Right ventricle myocardium inferior (tissue), 1 donor: ENCODE measurements at regions of chr1 and their contacts with region 1.

Region 1: GRCh38 chr1:84763912-84764663 is 73.8 kb upstream of the SSX2IP start:
- DNase-seq: no peak
- ATAC-seq: no peak

Region 2: DNA sequence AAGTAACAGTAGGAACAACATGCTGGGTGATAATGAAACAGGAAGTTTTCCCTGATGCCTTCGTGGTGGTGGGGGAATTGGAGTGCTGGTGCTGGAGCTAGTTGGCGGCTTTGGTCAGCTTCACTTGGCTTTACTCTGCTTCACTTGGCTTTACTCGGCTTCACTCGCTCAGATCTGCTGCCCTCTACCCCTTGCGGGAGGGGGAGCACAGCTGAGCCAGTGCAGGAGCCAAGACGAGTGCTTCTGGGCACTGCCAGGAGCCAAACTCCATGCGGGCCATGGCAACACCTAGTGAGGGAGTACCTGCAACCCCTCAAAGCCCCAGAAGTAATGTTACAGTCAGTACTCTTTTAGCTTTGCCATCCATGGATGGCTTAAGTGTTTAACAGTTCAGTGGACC is 630.6 kb before region 1 on chr1:
- intact Hi-C with region 1: loop called (anchors 10 kb)
- DNase-seq: no peak
- ATAC-seq: no peak

Region 3: GRCh38 chr1:84735483-84735882 is 28.6 kb before region 1 on chr1:
- intact Hi-C with region 1: no loop called
- DNase-seq: no peak
- ATAC-seq: no peak

Region 4: DNA sequence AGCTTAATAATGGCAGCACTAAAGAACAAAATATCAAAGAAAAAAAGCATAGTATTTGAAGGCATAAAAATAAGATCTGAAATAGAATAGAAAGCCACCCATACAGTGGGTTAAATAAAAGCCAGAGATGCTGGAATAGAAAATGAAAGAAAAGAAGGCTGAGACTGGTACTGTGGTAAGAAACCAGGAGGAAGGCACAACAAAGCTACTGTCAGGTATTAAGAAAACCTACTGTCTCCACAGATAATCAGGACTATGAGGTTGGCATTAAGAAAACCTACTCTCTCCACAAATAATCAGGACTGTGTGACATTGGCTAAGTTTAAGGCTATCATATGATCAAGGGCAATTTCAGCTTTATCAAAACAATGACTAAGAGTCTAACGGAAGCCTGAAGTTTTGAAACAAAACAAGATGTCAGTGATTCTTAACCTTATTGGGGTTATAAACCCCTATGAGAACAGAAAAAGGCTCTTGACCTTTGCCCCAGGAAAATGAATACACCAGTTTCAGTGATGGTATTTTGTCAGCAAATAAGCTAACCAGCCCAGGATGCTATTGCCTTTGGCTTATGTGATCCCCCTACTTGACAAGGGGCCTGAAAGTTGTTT is 208.4 kb after region 1 on chr1:
- intact Hi-C with region 1: no loop called
- DNase-seq: no peak
- ATAC-seq: no peak